Activated B cell treated with CpG ODN at 0.5 μM for 24 hours (primary cell): ENCODE measurements at regions of chr12 and their contacts with region 1.

Region 1: GRCh38 chr12:101919447-101919846 is 42.1 kb downstream of the DRAM1 start:
- DNase-seq: no peak
- ATAC-seq: no peak
- H3K4me3 Mint-ChIP-seq: no peak overlapping the region
- H3K27ac Mint-ChIP-seq: no peak overlapping the region
- H3K4me1 Mint-ChIP-seq: peaks cover 35% of the 10 kb centered on the region
- H3K27me3 Mint-ChIP-seq: no peaks in the 10 kb centered on the region
- CTCF ChIP-seq: no peak

Region 2: GRCh38 chr12:101891462-101892273 is 27.8 kb before region 1 on chr12:
- CTCF ChIA-PET with region 1: no interaction called
- POLR2A ChIA-PET with region 1: no interaction called
- intact Hi-C with region 1: no loop called
- DNase-seq: no peak
- ATAC-seq: peak; percentile 89
- H3K4me3 Mint-ChIP-seq: no peak overlapping the region
- H3K27ac Mint-ChIP-seq: peak overlapping the region; percentile 24
- H3K4me1 Mint-ChIP-seq: peaks cover 11% of the 10 kb centered on the region
- H3K27me3 Mint-ChIP-seq: no peaks in the 10 kb centered on the region
- CTCF ChIP-seq: no peak

Region 3: GRCh38 chr12:101931498-101932326 is 12.3 kb after region 1 on chr12:
- CTCF ChIA-PET with region 1: interaction called, 26 read pairs
- POLR2A ChIA-PET with region 1: interaction called, 23 read pairs
- intact Hi-C with region 1: loop called (anchors 1 kb)
- DNase-seq: no peak
- ATAC-seq: peak; percentile 63
- H3K4me3 Mint-ChIP-seq: peak overlapping the region; percentile 33
- H3K27ac Mint-ChIP-seq: peak overlapping the region; percentile 82
- H3K4me1 Mint-ChIP-seq: peaks cover 87% of the 10 kb centered on the region
- H3K27me3 Mint-ChIP-seq: no peaks in the 10 kb centered on the region
- CTCF ChIP-seq: no peak

Region 4: GRCh38 chr12:102029141-102029540 is 109.7 kb after region 1 on chr12:
- CTCF ChIA-PET with region 1: no interaction called
- POLR2A ChIA-PET with region 1: no interaction called
- intact Hi-C with region 1: no loop called
- DNase-seq: no peak
- ATAC-seq: no peak
- H3K4me3 Mint-ChIP-seq: no peak overlapping the region
- H3K27ac Mint-ChIP-seq: no peak overlapping the region
- H3K4me1 Mint-ChIP-seq: no peaks in the 10 kb centered on the region
- H3K27me3 Mint-ChIP-seq: no peaks in the 10 kb centered on the region
- CTCF ChIP-seq: no peak

Region 5: DNA sequence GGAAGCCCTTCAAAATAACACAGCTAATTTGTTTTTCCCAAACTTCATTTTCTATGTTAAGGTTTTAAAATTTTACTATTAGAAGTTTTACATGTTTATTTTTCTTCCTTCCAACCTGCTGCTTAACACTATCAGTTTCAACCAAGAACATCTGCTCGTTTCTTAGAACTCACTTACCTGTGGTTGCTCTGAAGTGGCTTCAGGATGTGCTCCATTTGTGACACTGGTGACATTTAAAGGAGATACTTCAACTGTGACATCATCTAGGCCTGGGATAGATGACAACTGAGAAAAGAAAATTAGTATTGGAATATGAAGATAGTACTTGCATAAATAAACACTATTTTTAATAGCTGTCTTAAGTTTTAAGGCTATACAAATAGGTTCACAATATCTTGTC is 124.5 kb after region 1 on chr12:
- CTCF ChIA-PET with region 1: no interaction called
- POLR2A ChIA-PET with region 1: no interaction called
- intact Hi-C with region 1: loop called (anchors 5 kb)
- DNase-seq: no peak
- ATAC-seq: no peak
- H3K4me3 Mint-ChIP-seq: no peak overlapping the region
- H3K27ac Mint-ChIP-seq: no peak overlapping the region
- H3K4me1 Mint-ChIP-seq: peaks cover 3% of the 10 kb centered on the region
- H3K27me3 Mint-ChIP-seq: no peaks in the 10 kb centered on the region
- CTCF ChIP-seq: no peak

Region 6: GRCh38 chr12:102119674-102120563 is 200.5 kb after region 1 on chr12 and contains the starts of genes NUP37 and PARPBP:
- CTCF ChIA-PET with region 1: no interaction called
- POLR2A ChIA-PET with region 1: no interaction called
- intact Hi-C with region 1: loop called (anchors 1 kb)
- DNase-seq: peak; percentile 90
- ATAC-seq: peak; percentile 98
- H3K4me3 Mint-ChIP-seq: peak within 1 kb of the TSS; percentile 95
- H3K27ac Mint-ChIP-seq: peak within 1 kb of the TSS; percentile 91
- H3K4me1 Mint-ChIP-seq: peaks cover 12% of the 10 kb centered on the region
- H3K27me3 Mint-ChIP-seq: no peaks in the 10 kb centered on the region
- CTCF ChIP-seq: no peak
- total RNA-seq, gene NUP37: 27.0 and 29.9 TPM in 2 replicates
- total RNA-seq, gene PARPBP: 4.6 and 5.0 TPM in 2 replicates

Region 7: DNA sequence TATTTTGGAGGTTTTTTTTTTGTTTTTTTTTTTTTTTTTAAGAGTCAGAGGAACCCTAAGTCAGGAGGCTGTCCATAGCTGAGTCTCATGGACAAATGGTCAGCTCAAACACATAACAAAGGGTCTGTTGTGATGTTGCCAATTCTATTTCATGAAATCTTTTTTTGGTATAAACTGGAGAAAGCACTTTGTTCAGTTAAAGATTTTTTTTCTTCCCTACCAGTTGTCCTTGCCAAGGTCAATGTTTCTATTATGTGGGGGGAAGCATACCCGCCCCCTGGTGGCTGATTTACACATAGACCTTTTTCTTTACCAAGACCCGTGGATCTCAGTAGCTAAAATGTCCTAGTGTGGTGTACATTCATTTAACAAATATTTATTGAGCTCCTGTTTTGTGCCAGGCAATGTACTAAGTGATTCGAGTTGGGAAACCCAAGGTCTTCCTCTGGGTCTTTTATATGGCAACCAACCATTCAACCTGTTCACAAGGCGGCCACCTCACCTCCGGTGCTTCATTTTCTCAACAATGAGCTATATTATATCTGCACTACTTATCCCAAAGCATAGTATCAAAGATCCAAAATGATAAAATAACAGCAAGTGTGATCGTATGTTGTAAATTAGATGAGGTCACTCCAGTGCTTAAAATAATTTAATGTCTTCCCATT is 783.1 kb after region 1 on chr12:
- CTCF ChIA-PET with region 1: interaction called, 16 read pairs
- POLR2A ChIA-PET with region 1: no interaction called
- intact Hi-C with region 1: loop called (anchors 1 kb)
- DNase-seq: no peak
- ATAC-seq: peak; percentile 45
- H3K4me3 Mint-ChIP-seq: no peak overlapping the region
- H3K27ac Mint-ChIP-seq: no peak overlapping the region
- H3K4me1 Mint-ChIP-seq: no peaks in the 10 kb centered on the region
- H3K27me3 Mint-ChIP-seq: peaks cover 11% of the 10 kb centered on the region
- CTCF ChIP-seq: no peak

Region 8: GRCh38 chr12:102879144-102879763 is 959.8 kb after region 1 on chr12:
- CTCF ChIA-PET with region 1: no interaction called
- POLR2A ChIA-PET with region 1: no interaction called
- intact Hi-C with region 1: loop called (anchors 1 kb)
- DNase-seq: no peak
- ATAC-seq: peak; percentile 60
- H3K4me3 Mint-ChIP-seq: no peak overlapping the region
- H3K27ac Mint-ChIP-seq: no peak overlapping the region
- H3K4me1 Mint-ChIP-seq: peaks cover 3% of the 10 kb centered on the region
- H3K27me3 Mint-ChIP-seq: peaks cover 18% of the 10 kb centered on the region
- CTCF ChIP-seq: no peak